Prostate gland (tissue), 2 donors: ENCODE measurements at regions of chr4 and their contacts with region 1.

Region 1: DNA sequence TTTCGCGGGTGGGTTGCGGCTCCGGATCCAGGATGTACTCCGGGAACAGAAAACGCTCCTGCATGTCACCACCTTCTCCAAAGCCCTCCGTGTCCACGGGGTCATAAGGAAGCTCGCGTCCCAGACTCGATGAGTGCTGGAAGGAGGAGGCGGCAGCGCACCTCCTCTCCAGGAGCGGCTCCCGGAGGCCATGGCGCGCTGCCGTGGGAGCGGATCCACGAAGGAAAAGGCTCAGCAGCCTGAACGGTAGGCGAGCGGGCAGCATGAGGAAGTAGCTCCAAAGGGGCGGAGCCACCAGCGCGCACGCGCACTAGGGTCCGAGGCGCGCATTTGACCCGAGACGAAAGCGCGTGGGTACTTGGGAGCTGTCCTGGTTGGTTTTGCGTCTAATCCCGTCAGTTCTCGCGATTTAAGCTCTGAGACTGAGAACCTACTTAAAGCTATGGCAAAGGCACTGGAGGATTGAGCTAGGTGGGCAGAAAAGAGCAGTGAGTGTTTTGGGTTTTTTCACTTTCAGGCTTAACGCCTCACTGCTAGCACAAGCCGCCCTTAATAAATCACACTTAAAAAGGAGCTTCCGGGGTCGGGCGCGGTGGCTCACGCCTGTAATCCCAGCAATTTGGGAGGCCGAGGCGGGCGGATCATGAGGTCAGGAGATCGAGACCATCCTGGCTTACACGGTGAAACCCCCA is at the start of gene NOA1:
- DNase-seq: peak; percentile 98
- H3K4me3 ChIP-seq: peak within 1 kb of the TSS; percentile 78 to 79
- H3K27ac ChIP-seq: peak within 1 kb of the TSS; percentile 88 to 90
- H3K4me1 ChIP-seq: peaks cover 5% of the 10 kb centered on the region
- H3K27me3 ChIP-seq: no peaks in the 10 kb centered on the region
- CTCF ChIP-seq: no peak
- POLR2A ChIP-seq: peak; percentile 86
- total RNA-seq, gene NOA1: 29.2 to 31.9 TPM

Region 2: DNA sequence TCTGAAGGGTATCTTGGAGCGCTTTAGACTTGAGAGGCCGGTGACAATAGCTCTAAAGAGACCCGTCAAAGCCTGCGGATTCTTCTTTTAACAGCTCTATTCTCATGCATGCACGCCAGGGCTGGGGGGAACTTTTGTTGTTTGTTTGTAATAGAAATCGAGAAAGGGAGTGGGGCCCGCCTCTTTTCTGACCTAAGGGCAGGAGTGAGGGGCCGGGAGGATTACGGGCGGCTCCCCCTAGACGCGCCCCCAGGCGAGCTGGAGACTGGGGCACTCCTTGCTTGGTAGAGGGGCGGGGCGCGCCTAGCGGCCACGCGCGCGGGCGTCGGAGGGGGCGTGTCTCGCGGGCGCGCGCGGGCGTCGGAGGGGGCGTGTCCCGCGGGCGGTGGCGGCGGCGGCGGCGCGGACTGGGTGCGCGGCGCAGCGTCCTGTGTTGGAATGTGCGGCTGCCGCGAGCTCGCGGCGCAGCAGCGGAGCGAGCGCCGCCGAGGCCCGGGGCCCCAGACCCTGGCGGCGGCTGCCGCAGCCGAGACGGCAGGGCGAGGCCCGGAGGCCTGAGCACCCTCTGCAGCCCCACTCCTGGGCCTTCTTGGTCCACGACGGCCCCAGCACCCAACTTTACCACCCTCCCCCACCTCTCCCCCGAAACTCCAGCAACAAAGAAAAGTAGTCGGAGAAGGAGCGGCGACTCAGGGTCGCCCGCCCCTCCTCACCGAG is 69.8 kb before region 1 on chr4 and contains the start of gene REST:
- intact Hi-C with region 1: loop called (anchors 5 kb)
- DNase-seq: peak; percentile 73
- H3K4me3 ChIP-seq: peak within 1 kb of the TSS; percentile 89 to 97
- H3K27ac ChIP-seq: peak within 1 kb of the TSS; percentile 96 to 97
- H3K4me1 ChIP-seq: peaks cover 6% of the 10 kb centered on the region
- H3K27me3 ChIP-seq: no peaks in the 10 kb centered on the region
- CTCF ChIP-seq: peak in 2 of 4 experiments; percentile 12 to 24
- POLR2A ChIP-seq: peak; percentile 51
- total RNA-seq, gene REST: 38.0 to 50.8 TPM

Region 3: GRCh38 chr4:57355101-57355665 is 377.7 kb after region 1 on chr4:
- intact Hi-C with region 1: no loop called
- DNase-seq: no peak
- H3K4me3 ChIP-seq: no peak overlapping the region
- H3K27ac ChIP-seq: no peak overlapping the region
- H3K4me1 ChIP-seq: no peaks in the 10 kb centered on the region
- H3K27me3 ChIP-seq: no peaks in the 10 kb centered on the region
- CTCF ChIP-seq: no peak
- POLR2A ChIP-seq: no peak